CD4-positive, alpha-beta T cell (primary cell): ENCODE measurements at regions of chr10 and their contacts with region 1.

Region 1: DNA sequence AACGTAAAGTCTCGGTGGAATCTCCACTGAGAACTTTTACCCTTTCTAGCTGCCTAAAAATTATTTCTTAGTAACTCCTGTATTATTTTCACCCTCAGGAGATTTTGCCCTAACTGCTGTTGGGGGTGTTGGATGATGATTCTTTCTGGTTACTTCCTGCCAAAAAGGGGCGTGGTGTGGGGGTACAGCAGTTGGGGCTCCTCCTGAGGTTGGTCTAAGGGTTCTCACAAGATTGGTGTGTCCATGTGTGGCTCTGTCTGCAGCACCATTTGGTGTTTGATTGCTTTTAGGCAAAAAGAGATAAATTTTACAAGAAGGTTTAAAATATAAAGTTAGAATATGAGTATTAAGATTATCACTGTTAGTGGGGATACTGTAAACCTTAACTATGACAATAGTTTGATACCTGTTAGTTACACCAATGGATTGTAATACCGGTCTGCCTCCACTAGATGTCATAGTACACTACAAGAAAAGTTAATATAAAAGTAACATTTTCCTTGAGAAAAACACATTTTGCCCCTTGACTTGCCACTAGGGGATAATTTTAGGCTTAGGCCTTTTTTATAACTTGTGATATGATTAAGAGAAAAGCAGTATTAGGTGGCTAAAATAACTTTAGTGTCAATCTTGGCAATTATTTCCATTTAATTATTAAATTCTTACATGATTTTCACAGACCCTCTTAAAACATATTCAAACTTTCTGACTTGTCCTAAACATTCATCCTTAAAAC is 928.7 kb downstream of the IPMK start:
- DNase-seq: peak in 2 of 14 experiments; percentile 9 to 17
- ATAC-seq: peak; percentile 41
- H3K4me3 ChIP-seq: no peak overlapping the region
- H3K4me3 Mint-ChIP-seq: no peak overlapping the region
- H3K27ac ChIP-seq: no peak overlapping the region
- H3K27ac Mint-ChIP-seq: no peak overlapping the region
- H3K4me1 ChIP-seq: no peaks in the 10 kb centered on the region
- H3K4me1 Mint-ChIP-seq: no peaks in the 10 kb centered on the region
- H3K27me3 ChIP-seq: no peaks in the 10 kb centered on the region
- H3K27me3 Mint-ChIP-seq: no peaks in the 10 kb centered on the region
- CTCF ChIP-seq: peak; percentile 45

Region 2: DNA sequence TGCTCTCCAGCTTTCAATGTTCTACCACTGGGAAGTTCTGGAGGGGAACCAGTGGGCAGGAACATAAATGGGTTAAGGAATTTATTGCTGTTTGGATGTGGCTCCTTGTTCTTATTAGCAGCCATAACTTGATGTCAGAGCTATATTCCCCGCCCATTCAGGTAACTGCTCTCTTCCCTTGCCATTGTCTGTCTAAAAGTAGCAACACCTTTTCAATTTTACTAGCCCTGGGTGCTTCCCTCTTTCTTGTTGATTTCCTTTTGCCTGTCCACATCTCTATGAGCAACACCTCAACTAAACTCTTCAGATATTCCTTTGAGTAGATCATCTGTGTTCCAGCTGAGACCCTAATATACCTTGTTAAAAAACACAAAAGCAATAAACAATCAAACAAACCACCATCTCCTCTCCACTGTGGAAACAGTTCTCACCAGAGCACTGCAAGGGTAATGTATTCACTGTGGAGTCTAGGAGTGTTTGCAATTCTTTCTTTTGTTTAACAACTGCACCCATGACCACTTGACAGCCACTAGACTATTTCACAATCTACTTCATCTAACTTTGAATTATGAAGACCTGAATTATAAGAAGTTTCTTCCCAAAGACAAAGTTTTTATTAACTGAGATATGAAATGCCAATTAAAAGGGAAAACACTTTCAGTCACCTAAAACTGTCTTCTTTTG is 492.0 kb after region 1 on chr10:
- CTCF ChIA-PET with region 1: no interaction called
- POLR2A ChIA-PET with region 1: no interaction called
- intact Hi-C with region 1: no loop called
- DNase-seq: no peak
- ATAC-seq: no peak
- H3K4me3 ChIP-seq: no peak overlapping the region
- H3K4me3 Mint-ChIP-seq: no peak overlapping the region
- H3K27ac ChIP-seq: no peak overlapping the region
- H3K27ac Mint-ChIP-seq: no peak overlapping the region
- H3K4me1 ChIP-seq: no peaks in the 10 kb centered on the region
- H3K4me1 Mint-ChIP-seq: no peaks in the 10 kb centered on the region
- H3K27me3 ChIP-seq: no peaks in the 10 kb centered on the region
- H3K27me3 Mint-ChIP-seq: no peaks in the 10 kb centered on the region
- CTCF ChIP-seq: no peak

Region 3: DNA sequence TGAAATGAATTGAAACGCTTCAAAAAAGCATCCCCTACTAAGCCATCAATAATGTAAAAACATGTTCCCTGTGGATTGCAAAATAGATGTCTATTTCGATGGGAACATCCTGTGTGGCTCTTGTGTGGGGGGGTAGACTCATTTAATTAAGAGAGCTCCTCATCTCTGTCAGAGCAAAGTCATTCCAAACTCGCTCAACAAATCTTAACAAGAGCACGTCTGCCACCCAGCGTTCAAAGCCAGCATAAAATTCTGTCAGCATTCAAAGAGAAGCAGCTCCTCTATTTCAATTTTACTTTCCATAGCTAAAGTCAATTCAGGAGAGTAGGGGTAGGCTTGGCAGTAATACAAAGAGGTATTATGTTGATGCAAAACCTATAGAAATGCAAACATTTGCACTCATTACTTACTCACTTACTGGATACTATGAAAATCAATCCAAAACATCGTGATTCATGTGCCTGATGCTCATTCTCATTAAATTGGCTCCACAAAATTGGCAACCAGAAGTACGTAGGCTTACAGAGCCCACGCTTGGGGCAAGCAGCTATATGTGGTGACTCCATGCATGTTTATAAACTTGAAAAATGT is 813.8 kb after region 1 on chr10:
- CTCF ChIA-PET with region 1: no interaction called
- POLR2A ChIA-PET with region 1: no interaction called
- intact Hi-C with region 1: loop called in 1 of 2 experiments (anchors 5 kb)
- DNase-seq: peak in 10 of 14 experiments; percentile 1 to 34 (median 13)
- ATAC-seq: no peak
- H3K4me3 ChIP-seq: no peak overlapping the region
- H3K4me3 Mint-ChIP-seq: no peak overlapping the region
- H3K27ac ChIP-seq: no peak overlapping the region
- H3K27ac Mint-ChIP-seq: no peak overlapping the region
- H3K4me1 ChIP-seq: no peaks in the 10 kb centered on the region
- H3K4me1 Mint-ChIP-seq: no peaks in the 10 kb centered on the region
- H3K27me3 ChIP-seq: no peaks in the 10 kb centered on the region
- H3K27me3 Mint-ChIP-seq: peaks cover 44% of the 10 kb centered on the region
- CTCF ChIP-seq: peak; percentile 33

Region 4: GRCh38 chr10:58291538-58292174 is 952.7 kb after region 1 on chr10:
- CTCF ChIA-PET with region 1: no interaction called
- POLR2A ChIA-PET with region 1: no interaction called
- intact Hi-C with region 1: loop called (anchors 2 to 10 kb)
- DNase-seq: peak in 8 of 14 experiments; percentile 4 to 69 (median 32)
- ATAC-seq: peak; percentile 74
- H3K4me3 ChIP-seq: no peak overlapping the region
- H3K4me3 Mint-ChIP-seq: no peak overlapping the region
- H3K27ac ChIP-seq: no peak overlapping the region
- H3K27ac Mint-ChIP-seq: no peak overlapping the region
- H3K4me1 ChIP-seq: no peaks in the 10 kb centered on the region
- H3K4me1 Mint-ChIP-seq: no peaks in the 10 kb centered on the region
- H3K27me3 ChIP-seq: no peaks in the 10 kb centered on the region
- H3K27me3 Mint-ChIP-seq: no peaks in the 10 kb centered on the region
- CTCF ChIP-seq: peak; percentile 92

Region 5: DNA sequence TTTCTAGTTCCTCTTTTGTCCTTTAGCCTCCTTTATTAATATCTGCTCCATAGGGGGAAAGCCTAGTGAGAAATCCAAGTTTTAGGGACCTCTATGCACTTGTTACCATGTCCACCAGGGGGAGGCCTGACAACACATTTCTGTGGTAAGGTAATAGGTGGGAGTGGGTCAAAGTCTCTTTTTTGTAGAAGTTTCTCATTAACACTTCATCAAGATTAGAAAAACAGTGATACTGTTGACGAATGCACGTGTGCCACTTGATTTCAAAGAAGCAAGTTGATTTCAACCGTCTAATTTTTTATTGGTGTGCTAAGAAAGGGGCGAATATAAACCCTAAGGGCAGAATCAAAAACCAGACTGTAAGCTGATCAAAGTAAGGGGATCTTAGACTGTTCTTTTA is 960.6 kb after region 1 on chr10:
- CTCF ChIA-PET with region 1: no interaction called
- POLR2A ChIA-PET with region 1: no interaction called
- intact Hi-C with region 1: loop called in 1 of 2 experiments (anchors 10 kb)
- DNase-seq: peak; percentile 24 to 81 (median 49)
- ATAC-seq: peak; percentile 86
- H3K4me3 ChIP-seq: no peak overlapping the region
- H3K4me3 Mint-ChIP-seq: no peak overlapping the region
- H3K27ac ChIP-seq: no peak overlapping the region
- H3K27ac Mint-ChIP-seq: no peak overlapping the region
- H3K4me1 ChIP-seq: no peaks in the 10 kb centered on the region
- H3K4me1 Mint-ChIP-seq: peaks cover 3% of the 10 kb centered on the region
- H3K27me3 ChIP-seq: no peaks in the 10 kb centered on the region
- H3K27me3 Mint-ChIP-seq: peaks cover 8% of the 10 kb centered on the region
- CTCF ChIP-seq: peak; percentile 95